AG04450 (cell line): ENCODE measurements at regions of chr14 and their contacts with region 1.

Region 1: GRCh38 chr14:69543341-69544249 is 31.1 kb downstream of the CCDC177 start:
- DNase-seq: peak; percentile 69
- H3K4me3 ChIP-seq: no peak overlapping the region
- H3K27ac ChIP-seq: no peak overlapping the region
- H3K27me3 ChIP-seq: peaks cover 10% of the 10 kb centered on the region
- CTCF ChIP-seq: no peak

Region 2: DNA sequence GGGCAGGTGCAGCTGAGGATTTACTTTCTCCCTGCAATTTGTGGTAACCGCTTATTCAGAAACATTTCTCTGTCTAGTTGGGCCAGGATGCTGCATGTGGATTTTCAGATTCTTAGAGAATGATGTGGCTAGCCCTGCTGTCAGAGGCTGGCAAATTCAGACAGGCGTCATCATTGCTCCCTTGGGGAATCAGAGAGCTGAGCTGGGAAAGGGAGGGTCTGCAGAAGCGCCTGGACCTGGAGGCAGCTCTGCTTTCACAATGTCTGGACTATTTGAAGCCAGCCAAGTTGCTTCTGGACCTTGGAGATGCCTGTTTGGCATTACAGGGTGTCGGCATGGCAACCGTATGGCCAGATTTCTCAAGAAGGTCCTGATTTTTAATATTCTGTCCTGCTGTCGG is 280.2 kb before region 1 on chr14:
- CTCF ChIA-PET with region 1: no interaction called
- POLR2A ChIA-PET with region 1: no interaction called
- DNase-seq: peak; percentile 59
- H3K4me3 ChIP-seq: no peak overlapping the region
- H3K27ac ChIP-seq: no peak overlapping the region
- H3K27me3 ChIP-seq: peaks cover 29% of the 10 kb centered on the region
- CTCF ChIP-seq: no peak

Region 3: DNA sequence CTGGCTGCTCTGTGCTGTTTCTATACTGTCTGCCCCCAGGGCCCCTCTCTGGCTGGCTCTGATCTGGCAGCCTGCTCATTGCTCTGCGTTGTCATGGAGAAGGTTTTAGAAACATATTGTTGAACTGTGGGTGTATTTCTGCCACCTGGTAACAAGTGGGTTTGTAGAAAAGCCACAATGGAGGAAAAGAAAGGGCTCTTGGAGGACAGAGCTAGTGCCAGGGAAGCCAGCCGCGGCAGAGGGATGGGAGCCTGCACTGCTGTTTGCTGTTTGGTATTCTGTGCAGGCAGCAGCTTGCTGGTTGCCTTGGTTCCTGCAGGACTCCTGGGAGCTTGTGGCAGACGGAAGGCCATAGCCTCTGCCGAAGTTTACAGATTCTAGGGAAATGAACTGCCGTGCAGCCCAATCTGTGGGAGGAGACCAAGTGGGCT is 16.0 kb after region 1 on chr14:
- CTCF ChIA-PET with region 1: interaction called, 16 read pairs
- POLR2A ChIA-PET with region 1: interaction called, 3 read pairs
- DNase-seq: no peak
- H3K4me3 ChIP-seq: no peak overlapping the region
- H3K27ac ChIP-seq: no peak overlapping the region
- H3K27me3 ChIP-seq: peaks cover 43% of the 10 kb centered on the region
- CTCF ChIP-seq: no peak

Region 4: GRCh38 chr14:69574263-69574953 is 30.8 kb after region 1 on chr14 and contains the start of gene CCDC177:
- CTCF ChIA-PET with region 1: interaction called, 20 read pairs
- POLR2A ChIA-PET with region 1: interaction called, 3 read pairs
- DNase-seq: no peak
- H3K4me3 ChIP-seq: peak within 1 kb of the TSS; percentile 46
- H3K27ac ChIP-seq: no peak within 1 kb of the TSS
- H3K27me3 ChIP-seq: peaks cover 67% of the 10 kb centered on the region
- CTCF ChIP-seq: peak; percentile 97
- polyA plus RNA-seq, gene CCDC177: not detected in 2 replicates